Lower leg skin (tissue), 4 donors: ENCODE measurements at regions of chr4 and their contacts with region 1.

Region 1: GRCh38 chr4:81471588-81472288 is at the start of gene RASGEF1B:
- DNase-seq: peak; percentile 88 to 97
- H3K4me3 ChIP-seq: peak within 1 kb of the TSS; percentile 94
- CTCF ChIP-seq: no peak
- POLR2A ChIP-seq: no peak
- total RNA-seq, gene RASGEF1B: 53.7 to 58.2 (median 57.6) TPM

Region 2: GRCh38 chr4:80221161-80221560 is 1250.6 kb before region 1 on chr4:
- intact Hi-C with region 1: no loop called
- DNase-seq: no peak
- H3K4me3 ChIP-seq: no peak overlapping the region
- CTCF ChIP-seq: no peak
- POLR2A ChIP-seq: no peak

Region 3: DNA sequence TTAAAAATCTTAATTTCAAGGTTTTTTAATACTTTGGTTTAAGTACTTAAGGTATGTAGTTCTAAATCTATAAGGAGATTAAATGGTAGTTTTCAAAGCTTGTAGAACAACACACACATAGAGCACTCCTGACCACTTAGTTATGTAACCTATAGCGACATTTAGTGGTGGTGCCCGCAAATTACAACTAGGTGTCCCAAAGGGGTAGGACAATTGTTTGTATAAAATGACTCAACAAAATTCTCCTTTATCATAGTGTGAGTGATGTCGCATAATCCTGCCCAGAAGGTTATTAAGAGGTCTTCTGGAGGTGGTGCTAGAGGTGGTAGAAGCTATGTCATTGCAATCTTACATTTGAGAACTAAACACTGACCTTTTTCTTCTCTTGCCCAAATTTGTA is 373.0 kb after region 1 on chr4:
- intact Hi-C with region 1: loop called (anchors 2 kb)
- DNase-seq: peak; percentile 83 to 94
- H3K4me3 ChIP-seq: no peak overlapping the region
- CTCF ChIP-seq: peak in 1 of 3 donors; percentile 58
- POLR2A ChIP-seq: no peak

Region 4: GRCh38 chr4:82248903-82249632 is 777.3 kb after region 1 on chr4:
- intact Hi-C with region 1: no loop called
- DNase-seq: no peak
- H3K4me3 ChIP-seq: no peak overlapping the region
- CTCF ChIP-seq: no peak
- POLR2A ChIP-seq: no peak